ENCODE measurements at regions of chr2 and their contacts with region 1.

Region 1: DNA sequence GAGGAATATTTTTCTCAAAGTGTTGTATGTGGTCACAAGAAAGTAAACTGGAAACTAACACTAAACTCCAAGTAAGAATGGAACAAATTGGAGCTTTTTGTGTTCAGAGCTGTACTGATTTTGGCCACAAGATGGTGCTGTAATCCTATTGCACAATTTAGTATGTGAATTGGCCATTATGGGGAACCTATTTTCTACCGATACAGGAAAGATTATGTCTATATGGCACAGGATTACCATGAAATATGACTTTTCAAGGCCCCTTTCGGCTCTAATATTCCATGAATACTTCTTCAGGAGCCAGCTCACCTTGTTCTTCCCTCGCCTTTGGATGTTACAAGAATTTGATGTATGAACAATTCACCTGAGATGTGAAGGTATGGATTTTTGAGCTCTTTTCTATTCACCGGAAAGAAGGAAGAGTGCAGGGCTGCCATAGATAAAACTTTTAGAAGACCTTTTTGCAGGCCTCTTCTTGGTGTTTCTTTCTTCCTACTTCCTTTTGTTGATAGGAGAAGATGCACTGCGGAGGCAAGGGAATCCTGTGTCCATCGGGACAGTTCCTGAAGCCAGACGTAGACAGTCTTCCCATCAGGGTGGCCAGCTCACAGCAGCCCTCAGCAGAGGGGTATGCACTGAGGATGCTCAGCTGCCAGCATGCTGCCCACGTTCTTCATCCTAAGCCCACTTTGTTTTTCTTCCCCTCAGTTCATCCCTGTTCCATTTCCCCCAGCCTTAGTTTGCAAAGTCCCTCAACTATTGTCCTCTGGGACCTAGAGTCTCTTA is 13.3 kb downstream of the MRPL44 start:
- DNase-seq: peak; percentile 77
- H3K4me3 Mint-ChIP-seq: no peak overlapping the region
- H3K27ac Mint-ChIP-seq: no peak overlapping the region
- H3K4me1 Mint-ChIP-seq: peaks cover 11% of the 10 kb centered on the region
- H3K27me3 Mint-ChIP-seq: no peaks in the 10 kb centered on the region

Region 2: DNA sequence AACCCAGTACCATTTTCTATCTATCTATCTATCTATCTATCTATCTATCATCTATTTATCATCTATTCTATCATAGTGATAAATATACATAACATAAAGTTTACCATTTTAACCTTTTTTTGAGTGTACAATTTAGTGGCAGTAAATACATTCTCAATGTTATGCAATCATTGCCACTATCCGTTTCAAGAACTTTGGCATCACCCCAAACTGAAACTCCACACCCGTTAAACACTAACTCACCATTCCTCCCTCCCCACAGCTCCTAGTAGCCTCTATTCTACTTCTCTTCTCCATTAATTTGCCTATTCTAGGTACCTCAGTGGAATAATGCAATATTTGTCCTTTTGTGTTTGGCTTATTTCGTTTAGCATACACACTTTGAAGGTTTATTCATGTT is 1001.0 kb before region 1 on chr2:
- CTCF ChIA-PET with region 1: no interaction called
- intact Hi-C with region 1: loop called (anchors 5 kb)
- DNase-seq: no peak
- H3K4me3 Mint-ChIP-seq: no peak overlapping the region
- H3K27ac Mint-ChIP-seq: no peak overlapping the region
- H3K4me1 Mint-ChIP-seq: no peaks in the 10 kb centered on the region
- H3K27me3 Mint-ChIP-seq: peaks cover 4% of the 10 kb centered on the region

Region 3: DNA sequence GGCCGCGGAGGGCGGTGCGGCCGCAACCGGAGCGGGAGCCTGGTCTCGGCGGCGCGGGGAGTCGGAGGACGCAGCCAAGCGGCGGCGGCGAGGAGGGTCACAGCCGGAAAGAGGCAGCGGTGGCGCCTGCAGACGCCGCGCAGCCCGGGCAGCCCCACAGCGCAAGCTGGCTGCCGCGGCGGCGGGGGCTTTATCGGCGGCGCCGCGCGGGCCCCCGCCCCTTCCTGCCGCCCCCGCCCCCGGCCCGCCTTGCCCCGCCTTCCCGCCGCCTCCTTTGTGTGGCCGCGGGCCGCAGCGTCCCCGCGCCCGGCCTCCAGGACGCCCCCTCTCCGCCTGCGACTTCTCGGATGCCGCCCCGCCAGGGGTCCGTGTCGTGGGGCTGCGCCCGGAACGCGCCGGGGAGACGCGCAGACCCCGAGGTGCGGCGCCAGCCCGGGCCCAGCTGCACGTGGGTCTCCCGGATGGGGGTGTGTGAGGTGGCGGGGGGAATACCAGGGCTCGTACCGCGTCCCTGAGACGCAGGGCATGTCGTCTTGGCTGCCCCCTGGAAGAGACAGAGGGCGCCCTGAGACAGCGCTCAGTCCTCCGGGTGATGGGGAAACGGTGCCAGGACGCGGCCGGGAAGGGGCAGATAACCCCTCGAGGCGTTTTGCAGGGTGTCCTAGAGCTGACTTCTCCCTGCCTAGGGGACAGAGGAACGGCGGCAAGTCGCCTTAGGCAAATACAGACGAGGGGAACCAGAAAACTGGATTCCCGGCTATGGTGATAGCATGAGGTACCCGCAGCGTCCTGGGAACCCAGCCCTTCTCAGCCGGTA is 68.8 kb after region 1 on chr2 and contains the start of gene SERPINE2:
- CTCF ChIA-PET with region 1: interaction called, 4 read pairs
- intact Hi-C with region 1: loop called (anchors 1 kb)
- DNase-seq: peak; percentile 81
- H3K4me3 Mint-ChIP-seq: peak within 1 kb of the TSS; percentile 93
- H3K27ac Mint-ChIP-seq: peak within 1 kb of the TSS; percentile 76
- H3K4me1 Mint-ChIP-seq: peaks cover 30% of the 10 kb centered on the region
- H3K27me3 Mint-ChIP-seq: peaks cover 29% of the 10 kb centered on the region
- total RNA-seq, gene SERPINE2: 64.6 to 69.5 TPM

Region 4: DNA sequence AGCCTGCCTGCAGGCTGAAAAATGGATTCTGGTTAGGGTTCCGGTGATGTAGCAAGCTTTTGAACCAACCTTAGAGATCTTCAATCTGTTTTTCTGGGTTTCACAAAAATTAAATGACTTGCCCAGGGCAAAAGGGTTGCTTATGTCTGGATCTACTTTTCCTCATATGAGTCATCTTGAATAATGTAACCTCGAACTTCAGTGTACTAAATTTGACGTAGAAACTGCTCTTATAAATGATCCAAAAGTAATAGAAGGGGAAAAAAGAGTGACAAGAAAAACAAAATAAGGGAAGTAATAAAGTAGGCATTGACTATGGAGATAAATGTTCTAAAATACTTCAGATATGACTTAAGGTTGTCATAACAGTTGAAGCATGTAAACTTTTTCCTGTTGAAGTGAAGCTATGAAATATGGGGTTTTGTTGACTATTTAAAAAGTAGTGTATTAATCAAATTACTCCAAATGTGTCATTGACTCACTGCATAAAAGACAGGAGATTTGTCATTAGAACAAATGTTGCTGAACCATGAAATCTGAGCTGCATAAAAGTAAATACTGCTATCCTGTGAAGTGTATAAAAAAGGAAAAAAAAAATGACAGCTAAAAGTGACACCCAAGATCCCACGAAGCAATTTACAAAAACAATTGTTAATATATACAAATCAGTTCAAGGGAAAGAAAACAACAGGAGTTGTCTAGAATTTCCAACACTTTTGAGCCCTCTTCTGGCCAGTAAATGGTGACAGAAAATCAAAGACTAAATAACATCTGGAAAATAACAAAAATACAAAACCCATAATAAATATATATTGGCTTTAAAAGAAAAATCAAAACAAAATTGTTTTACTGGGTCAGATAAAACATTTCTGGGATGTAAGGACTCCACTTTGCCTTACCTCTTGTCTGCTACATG is 172.1 kb after region 1 on chr2:
- CTCF ChIA-PET with region 1: interaction called, 4 read pairs
- intact Hi-C with region 1: loop called (anchors 5 kb)
- DNase-seq: no peak
- H3K4me3 Mint-ChIP-seq: no peak overlapping the region
- H3K27ac Mint-ChIP-seq: no peak overlapping the region
- H3K4me1 Mint-ChIP-seq: no peaks in the 10 kb centered on the region
- H3K27me3 Mint-ChIP-seq: peaks cover 9% of the 10 kb centered on the region

Region 5: GRCh38 chr2:224357098-224357901 is 386.8 kb after region 1 on chr2:
- CTCF ChIA-PET with region 1: interaction called, 5 read pairs
- intact Hi-C with region 1: loop called (anchors 1 kb)
- DNase-seq: peak; percentile 76
- H3K4me3 Mint-ChIP-seq: no peak overlapping the region
- H3K27ac Mint-ChIP-seq: no peak overlapping the region
- H3K4me1 Mint-ChIP-seq: no peaks in the 10 kb centered on the region
- H3K27me3 Mint-ChIP-seq: no peaks in the 10 kb centered on the region

Region 6: GRCh38 chr2:224650815-224651439 is 680.4 kb after region 1 on chr2:
- CTCF ChIA-PET with region 1: no interaction called
- intact Hi-C with region 1: loop called (anchors 1 kb)
- DNase-seq: no peak
- H3K4me3 Mint-ChIP-seq: no peak overlapping the region
- H3K27ac Mint-ChIP-seq: no peak overlapping the region
- H3K4me1 Mint-ChIP-seq: peaks cover 2% of the 10 kb centered on the region
- H3K27me3 Mint-ChIP-seq: no peaks in the 10 kb centered on the region